ENCODE measurements at regions of chr1 and their contacts with region 1.

Region 1: DNA sequence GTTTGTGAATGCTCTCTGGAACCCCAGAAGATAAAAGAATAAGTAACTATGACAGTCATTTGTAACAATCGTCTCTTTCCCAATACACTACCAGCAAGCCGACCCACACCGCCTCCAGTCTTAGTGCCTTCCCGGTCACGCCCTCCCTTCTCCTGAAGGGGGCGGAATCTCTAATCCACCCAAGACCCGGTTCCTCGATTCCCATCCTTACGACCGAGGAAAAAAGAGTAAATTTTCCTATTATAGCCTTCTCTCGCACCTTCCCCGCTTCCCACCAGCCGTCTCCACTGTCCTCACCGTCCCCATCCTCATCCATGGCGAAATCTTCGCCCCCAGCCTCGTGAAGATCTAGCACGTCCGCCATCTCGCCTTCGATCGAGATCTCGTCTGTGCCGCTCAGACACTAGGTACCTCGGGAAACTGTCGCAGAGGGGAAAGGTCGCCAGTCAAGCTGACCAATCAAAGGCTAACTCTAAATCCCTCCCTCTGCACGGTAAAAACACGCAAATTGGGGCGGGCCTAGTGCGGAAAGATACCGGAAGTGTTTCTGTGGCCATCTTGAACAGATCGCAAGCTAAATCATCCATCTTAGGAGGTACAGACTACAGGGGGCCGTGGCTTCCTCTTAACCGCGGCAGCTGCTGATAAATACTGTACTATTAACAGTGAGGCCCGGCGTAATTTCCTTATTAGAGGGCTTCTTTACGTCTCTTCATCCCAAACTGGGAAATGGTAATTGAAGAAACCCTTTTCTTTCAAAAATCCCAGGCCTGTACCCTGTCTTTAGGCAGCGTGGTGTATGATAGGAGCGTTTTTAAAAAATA is at the start of gene RBM8A:
- DNase-seq: peak; percentile 87 to 99 (median 90)
- ATAC-seq: peak; percentile 96
- H3K4me3 ChIP-seq: peak within 1 kb of the TSS; percentile 95
- H3K4me3 Mint-ChIP-seq: no peak within 1 kb of the TSS
- H3K27ac ChIP-seq: peak within 1 kb of the TSS; percentile 93 to 98
- H3K27ac Mint-ChIP-seq: no peak within 1 kb of the TSS
- H3K4me1 ChIP-seq: peaks cover 37% of the 10 kb centered on the region
- H3K4me1 Mint-ChIP-seq: peaks cover 21% of the 10 kb centered on the region
- H3K27me3 ChIP-seq: no peaks in the 10 kb centered on the region
- H3K27me3 Mint-ChIP-seq: no peaks in the 10 kb centered on the region
- CTCF ChIP-seq: peak; percentile 81
- total RNA-seq, gene RBM8A: 126 to 134 TPM

Region 2: GRCh38 chr1:145823565-145824498 is 103.4 kb before region 1 on chr1 and contains the starts of genes POLR3C and RNF115:
- CTCF ChIA-PET with region 1: no interaction called
- POLR2A ChIA-PET with region 1: interaction called, 26 read pairs
- intact Hi-C with region 1: no loop called
- DNase-seq: peak; percentile 75 to 95 (median 86)
- ATAC-seq: peak; percentile 96
- H3K4me3 ChIP-seq: peak within 1 kb of the TSS; percentile 74
- H3K4me3 Mint-ChIP-seq: peak within 1 kb of the TSS; percentile 96
- H3K27ac ChIP-seq: peak within 1 kb of the TSS; percentile 78 to 81
- H3K27ac Mint-ChIP-seq: peak within 1 kb of the TSS; percentile 91
- H3K4me1 ChIP-seq: peaks cover 12% of the 10 kb centered on the region
- H3K4me1 Mint-ChIP-seq: peaks cover 29% of the 10 kb centered on the region
- H3K27me3 ChIP-seq: no peaks in the 10 kb centered on the region
- H3K27me3 Mint-ChIP-seq: no peaks in the 10 kb centered on the region
- CTCF ChIP-seq: no peak
- total RNA-seq, gene POLR3C: 18.6 to 19.9 TPM
- total RNA-seq, gene RNF115: 11.4 to 11.9 TPM

Region 3: DNA sequence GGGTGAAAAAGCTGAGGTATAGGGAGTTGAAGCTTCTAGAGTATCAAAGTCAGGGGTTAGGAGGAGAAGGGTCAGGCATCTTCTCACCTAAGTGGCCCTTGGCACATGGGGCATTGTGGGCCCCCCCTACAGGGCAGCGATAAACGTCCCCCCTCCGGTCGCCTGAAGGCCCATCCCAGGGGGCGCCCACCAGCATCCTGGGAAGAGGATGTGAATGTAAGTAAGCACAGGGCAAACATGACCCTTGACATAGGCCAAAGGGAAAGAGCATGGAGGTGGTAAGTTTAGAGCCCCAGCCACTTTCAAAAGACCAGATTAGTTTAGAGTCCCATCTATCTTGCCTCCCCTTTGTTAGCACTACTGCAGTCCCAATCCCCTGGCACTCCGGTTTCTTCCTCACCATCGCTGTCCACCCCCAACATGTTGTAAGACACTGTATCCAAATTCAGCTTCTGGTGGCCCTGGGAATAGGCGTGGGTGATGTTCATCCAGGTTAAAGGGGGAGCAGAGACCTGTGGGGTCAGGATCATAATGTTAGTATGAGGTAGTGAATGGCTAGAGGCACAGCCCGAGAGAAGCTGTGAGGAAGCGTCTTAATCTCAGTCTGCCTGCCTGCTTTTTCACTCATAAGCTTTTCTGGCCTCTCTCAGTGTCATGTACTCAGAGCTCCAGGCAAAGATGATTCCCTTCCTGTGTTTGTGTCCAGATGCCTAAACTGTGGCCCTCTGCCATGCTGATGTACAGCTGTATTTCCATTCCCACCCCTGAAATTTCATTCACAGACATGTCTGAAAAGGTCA is 20.1 kb before region 1 on chr1:
- CTCF ChIA-PET with region 1: no interaction called
- POLR2A ChIA-PET with region 1: interaction called, 10 read pairs
- intact Hi-C with region 1: no loop called
- DNase-seq: no peak
- ATAC-seq: no peak
- H3K4me3 ChIP-seq: no peak overlapping the region
- H3K4me3 Mint-ChIP-seq: no peak overlapping the region
- H3K27ac ChIP-seq: no peak overlapping the region
- H3K27ac Mint-ChIP-seq: no peak overlapping the region
- H3K4me1 ChIP-seq: peaks cover 3% of the 10 kb centered on the region
- H3K4me1 Mint-ChIP-seq: peaks cover 6% of the 10 kb centered on the region
- H3K27me3 ChIP-seq: no peaks in the 10 kb centered on the region
- H3K27me3 Mint-ChIP-seq: no peaks in the 10 kb centered on the region
- CTCF ChIP-seq: no peak

Region 4: GRCh38 chr1:145978854-145979759 is 51.8 kb after region 1 on chr1:
- CTCF ChIA-PET with region 1: interaction called, 5 read pairs
- POLR2A ChIA-PET with region 1: interaction called, 24 read pairs
- intact Hi-C with region 1: no loop called
- DNase-seq: peak in 13 of 14 experiments; percentile 45 to 97 (median 66)
- ATAC-seq: peak; percentile 69
- H3K4me3 ChIP-seq: peak overlapping the region; percentile 45
- H3K4me3 Mint-ChIP-seq: no peak overlapping the region
- H3K27ac ChIP-seq: peak overlapping the region; percentile 93 to 94
- H3K27ac Mint-ChIP-seq: no peak overlapping the region
- H3K4me1 ChIP-seq: peaks cover 69% of the 10 kb centered on the region
- H3K4me1 Mint-ChIP-seq: peaks cover 6% of the 10 kb centered on the region
- H3K27me3 ChIP-seq: no peaks in the 10 kb centered on the region
- H3K27me3 Mint-ChIP-seq: no peaks in the 10 kb centered on the region
- CTCF ChIP-seq: peak; percentile 28

Region 5: GRCh38 chr1:146007506-146008133 is 80.3 kb after region 1 on chr1:
- CTCF ChIA-PET with region 1: interaction called, 11 read pairs
- POLR2A ChIA-PET with region 1: interaction called, 7 read pairs
- intact Hi-C with region 1: no loop called
- DNase-seq: no peak
- ATAC-seq: no peak
- H3K4me3 ChIP-seq: no peak overlapping the region
- H3K4me3 Mint-ChIP-seq: peak overlapping the region; percentile 86
- H3K27ac ChIP-seq: no peak overlapping the region
- H3K27ac Mint-ChIP-seq: peak overlapping the region; percentile 86
- H3K4me1 ChIP-seq: peaks cover 47% of the 10 kb centered on the region
- H3K4me1 Mint-ChIP-seq: peaks cover 46% of the 10 kb centered on the region
- H3K27me3 ChIP-seq: no peaks in the 10 kb centered on the region
- H3K27me3 Mint-ChIP-seq: no peaks in the 10 kb centered on the region
- CTCF ChIP-seq: peak; percentile 5

Region 6: GRCh38 chr1:146036965-146037646 is 109.8 kb after region 1 on chr1:
- CTCF ChIA-PET with region 1: interaction called, 4 read pairs
- POLR2A ChIA-PET with region 1: interaction called, 30 read pairs
- intact Hi-C with region 1: no loop called
- DNase-seq: peak; percentile 50 to 88 (median 68)
- ATAC-seq: peak; percentile 59
- H3K4me3 ChIP-seq: peak overlapping the region; percentile 83
- H3K4me3 Mint-ChIP-seq: peak overlapping the region; percentile 98
- H3K27ac ChIP-seq: peak overlapping the region; percentile 58 to 83
- H3K27ac Mint-ChIP-seq: peak overlapping the region; percentile 100
- H3K4me1 ChIP-seq: peaks cover 38% of the 10 kb centered on the region
- H3K4me1 Mint-ChIP-seq: peaks cover 45% of the 10 kb centered on the region
- H3K27me3 ChIP-seq: no peaks in the 10 kb centered on the region
- H3K27me3 Mint-ChIP-seq: peaks cover 40% of the 10 kb centered on the region
- CTCF ChIP-seq: no peak

Measured in CD4-positive, alpha-beta T cell (primary cell).